PC-9 (cell line): ENCODE measurements at regions of chr12 and their contacts with region 1.

Region 1: DNA sequence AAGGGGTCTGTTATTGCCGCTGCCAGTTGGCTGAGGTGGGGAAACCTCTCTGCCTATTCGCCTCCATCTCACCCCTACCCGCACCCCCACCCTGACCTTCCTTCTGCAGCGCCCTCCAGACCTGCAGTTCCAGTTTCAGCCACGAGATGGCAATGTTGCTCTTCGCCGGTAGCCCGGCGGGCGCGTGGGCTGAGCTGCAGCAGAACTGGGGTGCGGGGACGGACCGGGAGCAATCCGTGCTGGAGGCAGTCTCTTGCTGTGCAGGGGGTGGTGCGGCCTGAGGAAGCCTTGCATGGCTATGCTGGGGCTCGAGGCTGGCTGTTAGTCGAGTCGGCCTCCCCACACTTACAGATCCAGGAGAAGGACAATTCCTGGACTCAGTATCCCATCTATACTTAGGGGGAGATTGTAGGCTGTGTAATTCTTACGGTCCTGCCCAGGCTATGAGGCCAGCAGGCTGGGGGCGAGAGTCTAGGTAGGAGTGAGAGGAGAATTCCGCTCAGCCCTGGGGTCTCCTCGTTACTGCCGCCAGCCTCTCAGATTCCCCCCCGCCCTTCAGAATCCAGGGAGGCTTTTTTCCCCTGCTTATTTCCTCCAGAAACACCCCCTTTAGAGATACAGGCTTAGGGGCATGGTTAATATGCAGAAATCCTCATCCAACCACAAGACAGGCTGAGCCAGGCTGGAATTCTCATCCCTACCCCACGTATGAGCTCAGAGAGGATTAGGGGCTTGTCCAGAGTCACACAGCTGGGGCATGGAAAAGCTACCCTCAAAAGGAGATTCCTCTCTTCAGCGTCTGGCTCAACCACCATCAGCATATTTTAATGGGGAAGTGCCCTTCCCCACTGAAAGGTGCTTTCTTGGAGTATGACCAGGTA is 118.2 kb downstream of the AACS start:
- DNase-seq: peak; percentile 59 to 74
- H3K4me3 ChIP-seq: no peak overlapping the region
- H3K27ac ChIP-seq: no peak overlapping the region
- H3K4me1 ChIP-seq: no peaks in the 10 kb centered on the region
- H3K27me3 ChIP-seq: peaks cover 61% of the 10 kb centered on the region
- CTCF ChIP-seq: peak; percentile 98

Region 2: DNA sequence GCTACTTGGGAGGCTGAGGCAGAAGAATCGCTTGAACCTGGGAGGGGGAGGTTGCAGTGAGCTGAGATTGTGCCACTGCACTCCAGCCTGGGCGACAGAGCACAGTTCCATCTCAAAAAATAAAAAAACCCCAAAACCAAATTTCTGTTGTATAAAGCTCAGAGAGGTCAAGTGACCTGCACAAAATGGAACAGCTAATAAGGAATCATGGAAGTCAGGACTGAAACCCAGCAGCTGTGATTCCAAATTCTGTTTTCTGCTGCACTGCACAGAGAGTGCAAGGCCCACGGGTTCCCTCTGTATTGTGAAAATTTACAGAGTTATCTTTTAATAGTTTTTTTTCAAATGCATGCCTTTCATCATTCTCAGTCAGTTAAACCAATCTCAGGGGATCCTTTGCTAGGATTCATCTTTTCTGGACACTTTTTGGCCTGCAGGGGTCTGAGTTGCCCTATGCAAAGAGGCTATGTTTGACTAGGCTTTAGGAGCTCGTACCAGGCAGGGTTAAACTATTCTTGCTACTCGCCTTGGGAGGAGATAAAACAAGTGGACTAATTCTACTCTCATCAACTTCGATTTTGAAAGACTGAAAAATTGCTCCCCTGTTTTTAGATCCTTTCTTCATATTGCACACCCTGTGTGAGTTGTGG is 144.3 kb before region 1 on chr12:
- CTCF ChIA-PET with region 1: no interaction called
- POLR2A ChIA-PET with region 1: no interaction called
- intact Hi-C with region 1: no loop called
- DNase-seq: no peak
- H3K4me3 ChIP-seq: no peak overlapping the region
- H3K27ac ChIP-seq: no peak overlapping the region
- H3K4me1 ChIP-seq: no peaks in the 10 kb centered on the region
- H3K27me3 ChIP-seq: no peaks in the 10 kb centered on the region
- CTCF ChIP-seq: no peak

Region 3: DNA sequence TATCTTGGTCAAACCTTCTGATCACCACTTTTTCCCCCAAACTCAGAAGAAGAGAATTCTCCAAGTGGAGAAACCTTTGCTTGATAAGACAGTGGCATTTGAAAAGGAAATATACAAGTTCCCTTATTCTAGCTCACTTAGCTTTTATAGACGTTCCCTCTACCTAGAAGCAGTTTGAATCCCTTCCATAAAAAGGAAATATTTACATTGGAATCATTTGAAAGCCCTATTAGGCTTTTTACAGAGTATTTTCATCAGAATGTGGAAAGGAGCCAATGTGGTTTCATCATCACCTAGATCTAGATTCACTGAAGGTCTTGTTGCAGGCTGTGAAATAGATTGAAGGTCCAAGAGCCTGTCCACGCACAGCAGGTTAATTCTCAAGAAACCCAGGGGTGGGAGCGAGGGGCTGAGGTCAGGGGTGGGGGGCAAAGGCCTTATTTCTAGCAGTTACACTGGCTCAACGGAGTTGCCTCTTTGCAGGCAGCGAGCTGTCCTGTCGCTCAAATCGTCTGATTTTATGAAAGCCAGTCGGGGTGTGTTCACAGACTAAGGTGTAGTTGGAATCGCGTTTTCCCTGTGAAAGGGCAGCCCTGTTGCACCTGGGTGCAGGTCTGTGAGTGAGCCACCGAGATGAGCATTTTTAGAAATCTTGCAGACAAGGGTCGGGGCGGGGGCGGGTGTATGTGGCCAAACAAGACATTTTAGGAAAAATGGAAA is 72.6 kb before region 1 on chr12:
- CTCF ChIA-PET with region 1: no interaction called
- POLR2A ChIA-PET with region 1: no interaction called
- intact Hi-C with region 1: no loop called
- DNase-seq: no peak
- H3K4me3 ChIP-seq: no peak overlapping the region
- H3K27ac ChIP-seq: no peak overlapping the region
- H3K4me1 ChIP-seq: no peaks in the 10 kb centered on the region
- H3K27me3 ChIP-seq: no peaks in the 10 kb centered on the region
- CTCF ChIP-seq: no peak

Region 4: DNA sequence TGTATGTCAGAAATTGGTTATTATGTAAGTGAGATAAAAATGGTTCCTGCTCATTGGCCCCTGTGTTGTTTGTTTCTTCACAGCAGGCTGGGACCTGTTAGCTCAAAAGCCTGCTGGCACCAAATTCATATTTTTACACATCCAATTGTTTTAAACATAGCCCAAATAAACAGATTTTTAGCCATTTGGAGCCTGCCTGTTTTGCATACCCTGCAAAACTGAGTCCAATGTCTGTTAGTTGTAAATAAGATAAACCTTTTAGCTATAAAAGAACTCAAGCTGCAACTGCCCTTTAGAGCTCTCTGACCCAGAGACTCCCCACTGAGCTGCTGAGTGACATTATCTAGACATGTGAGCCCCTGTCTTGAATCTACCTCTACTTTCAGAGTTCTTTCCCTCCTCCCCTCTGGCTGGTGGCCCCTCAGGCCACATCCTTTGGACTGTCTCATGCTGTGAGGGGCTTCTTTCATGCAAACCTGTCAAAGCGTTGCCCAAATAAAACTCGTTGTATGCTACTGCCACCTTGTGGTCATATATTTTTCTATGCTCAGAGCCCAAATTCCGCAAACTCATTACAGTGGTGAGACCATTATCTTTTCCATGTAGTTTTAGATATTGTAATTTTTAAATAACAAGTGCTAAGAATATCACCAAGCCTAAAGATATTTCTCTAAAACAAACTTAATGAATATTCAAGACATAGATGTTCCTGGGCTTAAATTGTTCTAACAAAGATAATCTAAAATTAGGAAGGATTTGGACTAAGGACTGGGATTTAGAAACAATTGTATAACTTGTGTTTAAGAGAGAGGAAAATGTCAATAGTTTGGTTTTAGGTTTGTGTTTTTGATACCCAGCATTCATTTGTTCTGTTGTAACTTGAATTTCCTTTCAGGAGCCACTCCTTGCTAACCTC is 219.7 kb after region 1 on chr12:
- CTCF ChIA-PET with region 1: no interaction called
- POLR2A ChIA-PET with region 1: no interaction called
- intact Hi-C with region 1: loop called (anchors 5 kb)
- DNase-seq: peak in 1 of 2 experiments; percentile 3
- H3K4me3 ChIP-seq: no peak overlapping the region
- H3K27ac ChIP-seq: no peak overlapping the region
- H3K4me1 ChIP-seq: no peaks in the 10 kb centered on the region
- H3K27me3 ChIP-seq: 0 out of 2 replicates have a peak, but pooled peaks cover 9% of the 10 kb centered on the region
- CTCF ChIP-seq: peak; percentile 78